ENCODE measurements at regions of chr7 and their contacts with region 1.

Region 1: GRCh38 chr7:21767300-21767900 is 178.3 kb downstream of the CDCA7L start:
- DNase-seq: peak; percentile 83 to 91
- H3K4me3 ChIP-seq: no peak overlapping the region
- H3K4me3 Mint-ChIP-seq: no peak overlapping the region
- H3K27ac Mint-ChIP-seq: no peak overlapping the region
- H3K4me1 ChIP-seq: peaks cover 19% of the 10 kb centered on the region
- H3K4me1 Mint-ChIP-seq: peaks cover 24% of the 10 kb centered on the region
- H3K27me3 ChIP-seq: no peaks in the 10 kb centered on the region
- H3K27me3 Mint-ChIP-seq: no peaks in the 10 kb centered on the region
- CTCF ChIP-seq: peak; percentile 91 to 93

Region 2: DNA sequence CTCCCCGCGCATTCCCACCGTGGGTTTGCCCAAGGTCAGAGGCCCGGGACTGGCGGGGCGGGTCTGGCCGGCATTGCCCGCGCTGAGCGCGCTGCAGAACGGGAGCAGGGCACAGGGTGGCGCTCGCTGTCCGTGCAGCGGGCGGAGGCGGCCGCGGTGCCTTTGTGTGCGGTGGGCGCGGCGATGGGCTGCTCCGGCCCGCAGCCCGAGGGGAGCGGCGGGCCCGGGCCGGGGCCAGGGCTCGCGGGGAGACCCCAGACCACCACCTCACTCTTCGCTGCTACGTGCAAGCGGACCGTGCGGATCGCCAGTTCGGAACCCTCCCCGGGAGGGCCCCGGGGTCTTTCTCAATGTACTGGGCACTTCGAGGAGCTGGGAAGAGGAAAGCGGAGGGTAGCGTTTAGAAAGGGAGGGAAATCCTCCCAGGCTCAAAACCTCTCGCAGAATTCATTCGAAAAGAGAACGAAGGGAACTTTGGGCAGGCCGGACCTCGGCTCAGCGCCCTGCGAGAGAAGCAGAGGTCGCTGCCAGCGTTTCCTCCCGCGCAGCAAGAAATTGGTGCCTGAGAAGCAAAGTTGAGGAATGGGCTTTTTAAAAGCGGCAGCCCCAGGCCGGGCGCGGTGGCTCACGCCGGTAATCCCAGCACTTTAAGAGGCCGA is 989.2 kb before region 1 on chr7:
- CTCF ChIA-PET with region 1: no interaction called
- POLR2A ChIA-PET with region 1: no interaction called
- intact Hi-C with region 1: loop called (anchors 5 kb)
- DNase-seq: peak; percentile 60 to 83
- H3K4me3 ChIP-seq: peak overlapping the region; percentile 45
- H3K4me3 Mint-ChIP-seq: peak overlapping the region; percentile 79
- H3K27ac Mint-ChIP-seq: peak overlapping the region; percentile 56
- H3K4me1 ChIP-seq: peaks cover 10% of the 10 kb centered on the region; the same call in 1 of the 2 replicates
- H3K4me1 Mint-ChIP-seq: peaks cover 27% of the 10 kb centered on the region
- H3K27me3 ChIP-seq: no peaks in the 10 kb centered on the region
- H3K27me3 Mint-ChIP-seq: no peaks in the 10 kb centered on the region
- CTCF ChIP-seq: peak; percentile 77 to 81

Region 3: GRCh38 chr7:21497072-21497471 is 270.3 kb before region 1 on chr7:
- CTCF ChIA-PET with region 1: interaction called, 3 read pairs
- POLR2A ChIA-PET with region 1: no interaction called
- intact Hi-C with region 1: loop called (anchors 2 kb)
- DNase-seq: peak in 1 of 2 experiments; percentile 18
- H3K4me3 ChIP-seq: no peak overlapping the region
- H3K4me3 Mint-ChIP-seq: no peak overlapping the region
- H3K27ac Mint-ChIP-seq: no peak overlapping the region
- H3K4me1 ChIP-seq: no peaks in the 10 kb centered on the region
- H3K4me1 Mint-ChIP-seq: no peaks in the 10 kb centered on the region
- H3K27me3 ChIP-seq: no peaks in the 10 kb centered on the region
- H3K27me3 Mint-ChIP-seq: no peaks in the 10 kb centered on the region
- CTCF ChIP-seq: peak; percentile 33 to 60

Region 4: DNA sequence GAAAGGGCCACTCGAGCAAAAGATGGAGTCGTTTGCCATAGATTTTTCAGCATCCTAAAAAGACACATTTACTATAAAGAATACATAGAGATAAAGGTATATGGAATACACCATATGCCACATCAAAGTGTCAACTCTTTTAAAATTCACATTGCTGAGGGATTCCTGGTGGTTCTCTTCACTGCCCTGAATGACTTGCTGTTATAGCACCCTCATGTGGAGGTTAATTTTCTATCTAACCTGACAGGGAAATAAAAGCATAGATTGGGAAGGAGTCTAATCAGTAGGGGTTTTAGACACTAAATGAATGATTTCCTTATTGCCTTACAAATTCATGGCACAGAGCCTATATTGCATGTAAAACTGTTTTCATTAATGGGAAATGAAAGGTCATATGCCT is 198.6 kb before region 1 on chr7:
- CTCF ChIA-PET with region 1: interaction called, 4 read pairs
- POLR2A ChIA-PET with region 1: no interaction called
- intact Hi-C with region 1: loop called (anchors 1 kb)
- DNase-seq: peak in 1 of 2 experiments; percentile 32
- H3K4me3 ChIP-seq: no peak overlapping the region
- H3K4me3 Mint-ChIP-seq: no peak overlapping the region
- H3K27ac Mint-ChIP-seq: no peak overlapping the region
- H3K4me1 ChIP-seq: no peaks in the 10 kb centered on the region
- H3K4me1 Mint-ChIP-seq: no peaks in the 10 kb centered on the region
- H3K27me3 ChIP-seq: no peaks in the 10 kb centered on the region
- H3K27me3 Mint-ChIP-seq: no peaks in the 10 kb centered on the region
- CTCF ChIP-seq: peak; percentile 12 to 36

Region 5: DNA sequence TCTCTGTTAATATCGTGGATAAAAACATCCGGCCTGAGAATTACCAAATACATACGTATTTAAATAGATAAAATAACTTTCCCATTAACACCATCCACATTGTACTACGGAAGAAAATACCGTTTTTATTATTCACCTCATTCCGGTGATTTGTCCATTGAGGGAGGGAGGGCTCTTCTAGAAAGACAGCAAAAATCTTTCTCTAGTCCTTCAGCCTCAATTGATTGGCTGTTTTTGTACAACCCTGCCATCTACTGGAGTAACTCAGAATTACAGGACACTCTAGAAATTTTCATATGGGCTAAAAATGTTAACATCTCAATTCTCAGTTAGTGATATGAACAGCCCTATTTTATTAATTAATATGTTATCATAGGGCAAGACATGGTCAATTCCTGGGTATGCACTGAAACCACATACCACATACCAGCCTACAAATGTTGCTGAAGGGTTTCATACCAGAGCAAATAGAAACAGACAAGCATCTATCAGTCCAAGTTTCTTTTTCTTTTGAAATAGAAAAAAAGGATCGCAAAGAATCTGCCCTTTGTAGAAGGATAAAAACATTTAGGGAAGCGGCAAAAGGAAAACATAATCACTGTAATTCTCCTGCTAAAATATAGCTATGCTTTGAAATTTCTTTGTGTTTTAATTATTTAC is 234.1 kb after region 1 on chr7:
- CTCF ChIA-PET with region 1: interaction called, 13 read pairs
- POLR2A ChIA-PET with region 1: no interaction called
- intact Hi-C with region 1: loop called (anchors 2 kb)
- DNase-seq: peak in 1 of 2 experiments; percentile 60
- H3K4me3 ChIP-seq: no peak overlapping the region
- H3K4me3 Mint-ChIP-seq: no peak overlapping the region
- H3K27ac Mint-ChIP-seq: no peak overlapping the region
- H3K4me1 ChIP-seq: no peaks in the 10 kb centered on the region
- H3K4me1 Mint-ChIP-seq: no peaks in the 10 kb centered on the region
- H3K27me3 ChIP-seq: no peaks in the 10 kb centered on the region; the same call in 1 of the 2 replicates
- H3K27me3 Mint-ChIP-seq: peaks cover 12% of the 10 kb centered on the region
- CTCF ChIP-seq: peak; percentile 63 to 75

Region 6: GRCh38 chr7:22094413-22095342 is 327.3 kb after region 1 on chr7:
- CTCF ChIA-PET with region 1: no interaction called
- POLR2A ChIA-PET with region 1: no interaction called
- intact Hi-C with region 1: no loop called
- DNase-seq: no peak
- H3K4me3 ChIP-seq: no peak overlapping the region
- H3K4me3 Mint-ChIP-seq: no peak overlapping the region
- H3K27ac Mint-ChIP-seq: no peak overlapping the region
- H3K4me1 ChIP-seq: peaks cover 16% of the 10 kb centered on the region
- H3K4me1 Mint-ChIP-seq: peaks cover 7% of the 10 kb centered on the region
- H3K27me3 ChIP-seq: no peaks in the 10 kb centered on the region
- H3K27me3 Mint-ChIP-seq: no peaks in the 10 kb centered on the region
- CTCF ChIP-seq: no peak

Measured in Caco-2 (cell line).